Naive thymus-derived CD4-positive, alpha-beta T cell (primary cell): ENCODE measurements at regions of chr12 and their contacts with region 1.

Region 1: GRCh38 chr12:122471324-122472226 is 29.2 kb downstream of the ZCCHC8 start:
- DNase-seq: peak in 7 of 9 donors; percentile 26 to 68 (median 64)
- ATAC-seq: peak; percentile 86
- H3K4me3 ChIP-seq: no peak overlapping the region
- H3K4me3 Mint-ChIP-seq: no peak overlapping the region
- H3K27ac ChIP-seq: no peak overlapping the region
- H3K27ac Mint-ChIP-seq: peak overlapping the region in 8 of 9 donors; percentile 5 to 77 (median 46)
- H3K4me1 ChIP-seq: no peaks in the 10 kb centered on the region
- H3K4me1 Mint-ChIP-seq: peaks cover 1 to 23% (median 8%) of the 10 kb centered on the region in 7 donors
- H3K27me3 ChIP-seq: no peaks in the 10 kb centered on the region
- H3K27me3 Mint-ChIP-seq: no peaks in the 10 kb centered on the region

Region 2: DNA sequence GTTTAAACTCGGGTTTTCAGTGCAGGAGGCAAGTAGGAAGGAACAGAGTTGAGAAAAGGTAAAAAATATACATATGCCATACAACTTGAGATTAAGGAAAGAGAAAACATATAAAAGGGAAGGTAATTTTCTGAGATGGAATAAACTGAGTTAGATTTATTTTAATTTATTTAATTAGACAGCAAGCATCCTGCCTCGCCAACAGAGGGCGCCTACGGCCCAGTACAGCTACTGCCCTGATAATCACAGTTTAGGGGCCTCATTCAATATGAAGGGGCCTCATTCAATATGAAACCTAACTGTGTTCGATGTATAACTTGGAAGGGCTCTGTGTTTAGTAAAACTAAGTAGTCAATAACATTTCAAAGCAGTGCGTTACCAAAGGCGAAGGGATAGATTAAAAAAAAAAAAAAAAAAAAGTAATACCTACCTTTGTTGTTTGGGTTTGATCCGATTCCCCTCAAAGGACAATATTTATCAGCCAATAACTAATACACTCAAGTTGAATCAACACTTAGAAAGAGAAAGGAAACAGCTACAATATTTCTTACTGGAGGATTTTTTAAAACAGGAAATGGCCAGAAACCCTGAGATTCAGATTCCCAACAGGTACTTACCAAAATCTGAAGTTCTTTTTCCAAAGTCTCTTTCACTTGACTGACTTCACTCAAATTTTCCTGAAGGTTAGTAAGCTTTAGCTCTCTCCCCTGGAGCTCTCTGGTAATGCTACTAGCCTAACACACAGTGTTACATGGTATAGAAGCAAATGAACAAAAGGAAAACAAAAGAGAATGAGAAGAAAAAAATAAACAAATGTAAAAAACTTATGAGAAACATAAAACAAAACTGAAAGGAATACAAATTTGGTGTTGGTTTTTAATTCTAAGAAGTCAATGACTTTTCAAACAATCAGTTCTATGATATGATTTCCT is 135.3 kb before region 1 on chr12:
- CTCF ChIA-PET with region 1: interaction called, 7 read pairs
- POLR2A ChIA-PET with region 1: no interaction called
- intact Hi-C with region 1: loop called (anchors 1 to 10 kb)
- DNase-seq: peak in 8 of 9 donors; percentile 16 to 43 (median 33)
- ATAC-seq: peak; percentile 57
- H3K4me3 ChIP-seq: no peak overlapping the region
- H3K4me3 Mint-ChIP-seq: peak overlapping the region in 2 of 10 donors; percentile 21 to 32
- H3K27ac ChIP-seq: no peak overlapping the region
- H3K27ac Mint-ChIP-seq: peak overlapping the region in 7 of 9 donors; percentile 38 to 82 (median 71)
- H3K4me1 ChIP-seq: no peaks in the 10 kb centered on the region
- H3K4me1 Mint-ChIP-seq: peaks cover 5 to 18% (median 12%) of the 10 kb centered on the region in 7 donors
- H3K27me3 ChIP-seq: no peaks in the 10 kb centered on the region
- H3K27me3 Mint-ChIP-seq: no peaks in the 10 kb centered on the region

Region 3: DNA sequence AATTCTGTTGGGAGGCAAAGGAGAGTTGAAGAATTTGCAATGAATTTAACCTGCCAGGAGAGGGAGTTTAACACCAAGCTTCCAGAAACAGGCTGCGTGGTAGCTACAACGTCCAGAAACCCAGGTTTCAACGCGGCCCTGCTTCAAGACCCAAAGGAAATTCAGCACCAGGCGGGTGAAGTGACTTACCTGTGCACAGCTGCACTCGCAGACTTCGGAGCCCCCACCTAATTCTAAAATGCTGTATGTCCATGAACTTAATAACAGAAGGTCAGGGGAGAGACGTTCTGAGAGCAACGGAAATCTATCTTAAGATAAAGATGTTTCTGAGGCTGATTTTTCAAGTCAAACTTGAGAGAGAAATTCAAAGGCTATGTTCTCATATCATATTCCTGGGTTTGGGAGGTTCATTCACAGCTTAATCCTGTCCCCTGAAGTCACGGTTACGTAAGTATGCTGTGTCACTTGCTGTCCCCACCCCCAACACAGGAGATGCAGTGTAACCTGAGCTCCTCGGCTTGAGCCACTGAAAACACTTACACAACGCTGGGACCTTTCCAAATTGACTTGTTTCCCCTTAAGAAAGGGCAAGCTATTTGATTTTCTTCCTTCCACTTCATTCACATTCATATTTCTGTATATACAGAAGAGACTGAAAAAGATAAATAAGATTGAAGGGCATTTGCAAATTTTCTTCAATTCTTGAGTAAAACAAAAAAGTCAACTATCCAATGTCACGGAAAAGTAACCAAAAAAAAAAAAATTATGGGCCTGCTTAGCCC is 71.8 kb before region 1 on chr12:
- CTCF ChIA-PET with region 1: interaction called, 223 read pairs
- POLR2A ChIA-PET with region 1: interaction called, 40 read pairs
- intact Hi-C with region 1: loop called (anchors 1 kb)
- DNase-seq: peak in 8 of 9 donors; percentile 27 to 76 (median 65)
- ATAC-seq: peak; percentile 77
- H3K4me3 ChIP-seq: no peak overlapping the region
- H3K4me3 Mint-ChIP-seq: peak overlapping the region; percentile 40 to 80 (median 69)
- H3K27ac ChIP-seq: peak overlapping the region; percentile 56
- H3K27ac Mint-ChIP-seq: peak overlapping the region; percentile 83 to 96 (median 89)
- H3K4me1 ChIP-seq: peaks cover 0 to 6% of the 10 kb centered on the region in 2 donors
- H3K4me1 Mint-ChIP-seq: peaks cover 24 to 50% (median 39%) of the 10 kb centered on the region in 7 donors
- H3K27me3 ChIP-seq: no peaks in the 10 kb centered on the region
- H3K27me3 Mint-ChIP-seq: no peaks in the 10 kb centered on the region

Region 4: DNA sequence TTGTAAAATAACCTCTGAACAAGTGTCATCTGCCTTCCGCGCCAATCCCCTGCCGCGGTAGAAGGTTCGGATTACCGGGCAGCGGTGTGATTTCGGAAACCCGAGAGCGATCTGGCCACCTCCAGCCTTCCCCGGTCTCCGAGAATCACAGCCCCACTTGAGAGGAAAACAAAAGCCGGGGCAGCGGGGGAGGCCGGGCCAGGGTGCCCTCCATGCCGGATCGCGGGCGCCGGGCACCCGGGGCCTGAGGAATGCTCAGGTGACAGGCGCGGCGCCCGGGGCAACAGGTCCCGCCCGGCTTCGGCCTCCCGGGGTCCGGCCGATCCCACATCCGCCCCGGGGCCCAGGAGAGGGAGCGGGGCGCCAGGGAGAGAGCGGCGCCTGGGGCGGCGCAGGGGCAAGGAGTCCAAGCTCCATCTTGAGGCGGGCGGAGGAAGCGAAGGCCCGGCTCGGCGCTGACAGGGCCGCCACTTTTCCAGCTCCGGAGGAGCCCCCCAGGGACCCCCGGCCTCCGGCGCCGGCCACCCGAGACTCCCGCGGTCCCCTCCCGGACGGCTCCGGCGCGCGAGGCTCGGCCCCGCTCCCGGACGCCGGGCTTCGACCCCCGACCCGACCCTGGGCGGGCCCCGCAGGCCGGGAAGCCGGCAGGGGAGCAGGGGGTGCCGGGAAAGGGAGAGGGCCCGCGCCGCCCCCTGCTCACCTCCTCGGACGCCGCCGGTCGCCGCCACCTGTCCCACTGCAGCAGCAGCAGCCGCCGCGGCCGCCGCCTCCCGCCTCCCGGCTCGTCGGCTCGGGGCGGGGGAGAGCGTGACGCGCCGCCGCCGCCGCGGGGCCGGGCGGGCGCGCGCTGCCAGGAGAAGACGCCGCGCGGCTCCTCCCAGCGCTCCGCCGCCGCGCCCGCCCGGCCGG is 49.5 kb before region 1 on chr12 and contains the start of gene CLIP1:
- CTCF ChIA-PET with region 1: interaction called, 6 read pairs
- POLR2A ChIA-PET with region 1: no interaction called
- intact Hi-C with region 1: loop called (anchors 1 kb)
- DNase-seq: peak; percentile 40 to 73 (median 57)
- ATAC-seq: peak; percentile 84
- H3K4me3 ChIP-seq: peak within 1 kb of the TSS; percentile 71
- H3K4me3 Mint-ChIP-seq: peak within 1 kb of the TSS; percentile 91 to 97 (median 92)
- H3K27ac ChIP-seq: peak within 1 kb of the TSS; percentile 90
- H3K27ac Mint-ChIP-seq: peak within 1 kb of the TSS; percentile 83 to 93 (median 91)
- H3K4me1 ChIP-seq: peaks cover 17 to 20% of the 10 kb centered on the region in 2 donors
- H3K4me1 Mint-ChIP-seq: peaks cover 23 to 39% (median 35%) of the 10 kb centered on the region in 7 donors
- H3K27me3 ChIP-seq: no peaks in the 10 kb centered on the region
- H3K27me3 Mint-ChIP-seq: no peaks in the 10 kb centered on the region
- total RNA-seq, gene CLIP1: 54.7 to 89.3 (median 65.1) TPM

Region 5: DNA sequence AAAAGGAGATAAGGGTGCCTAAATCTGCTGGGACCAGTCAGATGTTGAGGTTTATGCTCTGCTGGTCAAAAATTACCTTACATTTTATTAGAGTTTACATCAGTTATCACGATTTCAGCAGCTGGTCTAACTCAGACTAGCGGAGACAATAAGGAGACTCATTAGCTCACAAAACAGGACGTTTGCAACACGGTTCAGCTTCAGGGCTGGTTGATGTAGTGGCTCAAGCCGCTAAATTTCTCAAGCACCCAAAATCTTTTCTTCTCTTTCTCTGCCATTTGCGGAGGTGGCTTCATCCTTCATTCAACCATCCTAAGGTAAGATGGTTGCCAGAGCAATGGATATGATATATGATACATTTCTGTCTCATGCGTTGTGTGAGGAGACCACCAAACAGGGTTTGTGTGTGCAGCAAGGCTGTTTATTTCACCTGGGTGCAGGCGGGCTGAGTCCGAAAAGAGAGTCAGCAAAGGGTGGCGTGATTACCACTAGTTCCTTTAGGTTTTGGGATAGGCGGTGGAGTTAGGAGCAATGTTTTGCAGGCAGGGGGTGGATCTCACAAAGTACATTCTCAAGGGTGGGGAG is 18.8 kb before region 1 on chr12:
- CTCF ChIA-PET with region 1: interaction called, 11 read pairs
- POLR2A ChIA-PET with region 1: interaction called, 3 read pairs
- intact Hi-C with region 1: loop called (anchors 1 kb)
- DNase-seq: no peak
- ATAC-seq: no peak
- H3K4me3 ChIP-seq: peak overlapping the region; percentile 36
- H3K4me3 Mint-ChIP-seq: peak overlapping the region; percentile 64 to 87 (median 81)
- H3K27ac ChIP-seq: peak overlapping the region; percentile 63
- H3K27ac Mint-ChIP-seq: peak overlapping the region; percentile 91 to 99 (median 98)
- H3K4me1 ChIP-seq: peaks cover 22 to 24% of the 10 kb centered on the region in 2 donors
- H3K4me1 Mint-ChIP-seq: peaks cover 22 to 41% (median 33%) of the 10 kb centered on the region in 7 donors
- H3K27me3 ChIP-seq: no peaks in the 10 kb centered on the region
- H3K27me3 Mint-ChIP-seq: no peaks in the 10 kb centered on the region

Region 6: GRCh38 chr12:122491991-122492390 is 20.4 kb after region 1 on chr12:
- CTCF ChIA-PET with region 1: no interaction called
- POLR2A ChIA-PET with region 1: no interaction called
- intact Hi-C with region 1: no loop called
- DNase-seq: no peak
- ATAC-seq: no peak
- H3K4me3 ChIP-seq: no peak overlapping the region
- H3K4me3 Mint-ChIP-seq: no peak overlapping the region
- H3K27ac ChIP-seq: no peak overlapping the region
- H3K27ac Mint-ChIP-seq: peak overlapping the region in 2 of 9 donors; percentile 4 to 20
- H3K4me1 ChIP-seq: no peaks in the 10 kb centered on the region
- H3K4me1 Mint-ChIP-seq: peaks cover 6 to 27% (median 19%) of the 10 kb centered on the region in 7 donors
- H3K27me3 ChIP-seq: no peaks in the 10 kb centered on the region
- H3K27me3 Mint-ChIP-seq: no peaks in the 10 kb centered on the region